RWPE1 (cell line): ENCODE measurements at regions of chr20 and their contacts with region 1.

Region 1: GRCh38 chr20:47196091-47197081 is 160.1 kb downstream of the ZMYND8 start:
- DNase-seq: peak; percentile 89
- H3K27ac ChIP-seq: no peak overlapping the region
- CTCF ChIP-seq: peak; percentile 99

Region 2: GRCh38 chr20:47125583-47126373 is 70.6 kb before region 1 on chr20:
- CTCF ChIA-PET with region 1: interaction called, 12 read pairs
- POLR2A ChIA-PET with region 1: no interaction called
- DNase-seq: peak; percentile 93
- H3K27ac ChIP-seq: peak overlapping the region; percentile 98
- CTCF ChIP-seq: no peak